Panc1 (cell line): ENCODE measurements at regions of chr12 and their contacts with region 1.

Region 1: DNA sequence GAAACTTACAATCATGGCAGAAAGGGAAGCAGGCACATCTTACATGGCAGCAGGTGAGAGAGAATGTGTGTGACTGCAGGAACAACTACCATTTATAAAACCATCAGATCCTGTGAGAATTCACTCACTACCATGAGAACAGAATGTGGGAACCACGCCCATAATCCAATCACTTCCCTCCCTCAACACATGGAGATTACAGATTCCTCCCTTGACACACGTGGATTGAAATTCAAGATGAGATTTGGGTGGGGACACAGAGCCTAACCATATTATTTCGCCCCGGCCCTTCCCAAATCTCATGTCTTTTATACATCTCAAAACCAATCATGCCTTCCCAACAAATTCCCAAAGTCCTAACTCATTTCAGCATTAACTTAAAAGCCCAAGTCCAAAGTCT is 203.6 kb downstream of the C12orf75 start:
- DNase-seq: no peak
- ATAC-seq: no peak
- H3K4me3 ChIP-seq: no peak overlapping the region
- H3K27ac ChIP-seq: no peak overlapping the region
- H3K4me1 ChIP-seq: no peaks in the 10 kb centered on the region
- H3K27me3 ChIP-seq: no peaks in the 10 kb centered on the region
- CTCF ChIP-seq: no peak

Region 2: GRCh38 chr12:105420659-105421240 is 113.3 kb before region 1 on chr12:
- CTCF ChIA-PET with region 1: no interaction called
- POLR2A ChIA-PET with region 1: no interaction called
- in situ Hi-C with region 1: no loop called
- intact Hi-C with region 1: no loop called
- DNase-seq: peak; percentile 55
- ATAC-seq: peak; percentile 94
- H3K4me3 ChIP-seq: no peak overlapping the region
- H3K27ac ChIP-seq: peak overlapping the region; percentile 75
- H3K4me1 ChIP-seq: peaks cover 5% of the 10 kb centered on the region
- H3K27me3 ChIP-seq: no peaks in the 10 kb centered on the region
- CTCF ChIP-seq: peak; percentile 88

Region 3: GRCh38 chr12:105585107-105585506 is 51.0 kb after region 1 on chr12:
- CTCF ChIA-PET with region 1: no interaction called
- POLR2A ChIA-PET with region 1: interaction called, 12 read pairs
- in situ Hi-C with region 1: no loop called
- intact Hi-C with region 1: no loop called
- DNase-seq: no peak
- ATAC-seq: no peak
- H3K4me3 ChIP-seq: no peak overlapping the region
- H3K27ac ChIP-seq: no peak overlapping the region
- H3K4me1 ChIP-seq: no peaks in the 10 kb centered on the region
- H3K27me3 ChIP-seq: no peaks in the 10 kb centered on the region
- CTCF ChIP-seq: no peak